ENCODE measurements at regions of chr11 and their contacts with region 1.

Region 1: DNA sequence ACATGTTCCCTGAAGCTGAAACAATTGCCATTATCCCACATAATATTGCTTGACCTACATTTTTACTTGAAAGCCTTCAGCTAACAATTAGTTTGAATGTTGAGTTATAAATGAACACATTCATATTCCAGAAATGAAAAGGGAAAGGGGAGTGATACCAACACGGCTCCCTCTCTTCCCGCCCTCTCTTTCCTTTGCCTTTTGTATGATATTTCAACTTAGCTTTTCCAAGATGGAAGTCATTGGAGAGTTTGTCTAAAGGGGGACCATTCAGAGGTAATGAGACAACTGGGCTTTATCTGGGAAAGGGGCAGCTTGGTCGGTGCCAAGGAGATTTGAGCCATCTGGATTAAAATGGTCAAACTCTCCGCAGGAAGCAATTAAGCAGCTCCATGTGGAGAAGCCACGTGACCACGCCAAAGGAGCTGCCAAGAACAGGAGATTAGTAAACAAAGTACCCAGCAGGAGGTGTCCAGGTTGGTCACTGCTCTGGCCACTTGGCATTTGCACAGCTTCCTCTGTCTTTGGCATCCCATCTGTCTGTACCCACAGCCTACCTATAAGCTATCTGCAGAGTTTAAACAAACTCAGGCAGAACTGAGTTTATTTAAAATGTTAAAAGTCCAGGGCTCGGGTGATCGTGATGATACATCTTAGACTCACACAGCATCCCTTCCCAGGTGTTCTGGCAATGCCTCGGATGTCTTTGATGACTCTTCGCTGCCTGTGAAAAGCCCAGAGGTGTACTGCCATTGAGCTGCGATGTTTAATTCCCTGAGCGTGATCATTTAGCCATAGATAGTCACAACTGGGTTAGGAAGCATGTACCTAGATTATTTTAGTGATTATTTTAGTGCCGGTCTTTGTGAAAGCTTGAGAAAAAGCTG is 735.9 kb downstream of the NTM start:
- DNase-seq: no peak
- H3K4me3 ChIP-seq: no peak overlapping the region
- H3K27ac ChIP-seq: no peak overlapping the region
- H3K4me1 ChIP-seq: peaks cover 4 to 16% (median 7%) of the 10 kb centered on the region in 4 experiments
- H3K27me3 ChIP-seq: no peaks in the 10 kb centered on the region
- CTCF ChIP-seq: no peak
- EP300 ChIP-seq: no peak
- POLR2A ChIP-seq: no peak
- RAD21 ChIP-seq: no peak

Region 2: DNA sequence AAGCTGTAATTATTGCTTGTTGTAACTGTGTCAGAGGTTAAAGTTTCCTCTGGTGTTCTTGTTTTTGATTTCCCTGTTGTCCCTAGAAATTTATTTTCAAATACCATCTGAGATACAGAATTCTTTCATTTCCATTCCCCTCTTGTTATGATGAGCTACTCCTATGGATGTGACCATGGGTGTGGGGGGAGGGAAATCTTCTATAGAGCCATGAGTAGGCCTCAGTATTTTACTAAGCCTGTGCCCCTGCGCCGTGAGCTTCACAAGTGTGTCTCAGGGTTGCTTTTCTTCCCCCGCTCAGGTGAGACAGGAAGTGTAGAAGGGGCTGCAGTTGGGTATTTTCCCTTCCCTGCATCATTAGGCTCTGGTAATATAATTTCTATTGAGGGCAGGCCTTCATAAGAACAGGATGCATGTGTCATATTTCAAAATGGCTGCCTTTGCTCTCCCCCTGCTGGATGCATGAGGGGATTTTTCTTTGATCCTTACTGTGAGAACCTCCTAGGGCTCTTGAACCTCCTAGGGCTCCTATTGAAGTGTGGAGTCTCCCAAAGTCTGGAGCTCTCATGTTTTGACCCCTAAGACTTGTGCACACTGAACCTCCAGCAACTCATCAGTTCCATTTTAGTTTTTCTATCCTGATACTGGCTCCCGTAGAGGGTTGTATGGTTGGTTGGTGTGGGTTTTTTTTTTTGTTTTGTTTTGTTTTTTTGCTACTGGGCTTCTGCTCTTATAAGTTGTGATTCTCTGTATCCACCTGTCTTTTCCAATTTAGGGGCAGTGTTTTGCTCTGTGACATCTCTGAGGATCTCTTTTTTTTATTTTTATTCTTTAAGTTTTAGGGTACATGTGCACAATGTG is 77.7 kb before region 1 on chr11:
- CTCF ChIA-PET with region 1: no interaction called
- POLR2A ChIA-PET with region 1: no interaction called
- DNase-seq: no peak
- H3K4me3 ChIP-seq: no peak overlapping the region
- H3K27ac ChIP-seq: no peak overlapping the region
- H3K4me1 ChIP-seq: peaks cover 2 to 8% (median 4%) of the 10 kb centered on the region in 4 experiments; a peak in 4 of 7 replicates
- H3K27me3 ChIP-seq: no peaks in the 10 kb centered on the region
- CTCF ChIP-seq: peak in 2 of 3 experiments; percentile 57 to 61; a peak in 3 of 4 replicates
- EP300 ChIP-seq: no peak
- POLR2A ChIP-seq: no peak
- RAD21 ChIP-seq: peak; percentile 39 to 62

Region 3: GRCh38 chr11:132119573-132119972 is 13.2 kb after region 1 on chr11:
- CTCF ChIA-PET with region 1: interaction called, 51 read pairs
- POLR2A ChIA-PET with region 1: no interaction called
- DNase-seq: no peak
- H3K4me3 ChIP-seq: no peak overlapping the region
- H3K27ac ChIP-seq: no peak overlapping the region
- H3K4me1 ChIP-seq: peaks cover 8 to 25% (median 21%) of the 10 kb centered on the region in 4 experiments
- H3K27me3 ChIP-seq: no peaks in the 10 kb centered on the region
- CTCF ChIP-seq: no peak
- EP300 ChIP-seq: no peak
- POLR2A ChIP-seq: no peak
- RAD21 ChIP-seq: no peak